Activated CD4-positive, alpha-beta T cell treated with anti-CD3 and anti-CD28 coated beads, Interleukin-2, amount 10 ng/mL, durations not matched to agents 7 days and 5 days (primary cell): ENCODE measurements at regions of chr4 and their contacts with region 1.

Region 1: GRCh38 chr4:153486281-153487151 is 20.4 kb downstream of the TMEM131L start:
- DNase-seq: no peak
- H3K4me3 Mint-ChIP-seq: peak overlapping the region; percentile 65
- H3K27ac Mint-ChIP-seq: peak overlapping the region; percentile 94
- H3K4me1 Mint-ChIP-seq: peaks cover 83% of the 10 kb centered on the region
- H3K27me3 Mint-ChIP-seq: no peaks in the 10 kb centered on the region

Region 2: GRCh38 chr4:153452658-153453378 is 33.7 kb before region 1 on chr4:
- CTCF ChIA-PET with region 1: no interaction called
- POLR2A ChIA-PET with region 1: no interaction called
- DNase-seq: no peak
- H3K4me3 Mint-ChIP-seq: no peak overlapping the region
- H3K27ac Mint-ChIP-seq: peak overlapping the region; percentile 3
- H3K4me1 Mint-ChIP-seq: peaks cover 36% of the 10 kb centered on the region
- H3K27me3 Mint-ChIP-seq: no peaks in the 10 kb centered on the region

Region 3: GRCh38 chr4:153466081-153466948 is 20.2 kb before region 1 on chr4 and contains the start of gene TMEM131L:
- CTCF ChIA-PET with region 1: interaction called, 12 read pairs
- POLR2A ChIA-PET with region 1: no interaction called
- DNase-seq: peak; percentile 68
- H3K4me3 Mint-ChIP-seq: peak within 1 kb of the TSS; percentile 86
- H3K27ac Mint-ChIP-seq: peak within 1 kb of the TSS; percentile 95
- H3K4me1 Mint-ChIP-seq: peaks cover 43% of the 10 kb centered on the region
- H3K27me3 Mint-ChIP-seq: no peaks in the 10 kb centered on the region
- total RNA-seq, gene TMEM131L: 49.3 to 56.0 TPM

Region 4: GRCh38 chr4:153497988-153498967 is 11.8 kb after region 1 on chr4:
- CTCF ChIA-PET with region 1: interaction called, 11 read pairs
- POLR2A ChIA-PET with region 1: no interaction called
- DNase-seq: no peak
- H3K4me3 Mint-ChIP-seq: peak overlapping the region; percentile 66
- H3K27ac Mint-ChIP-seq: peak overlapping the region; percentile 97
- H3K4me1 Mint-ChIP-seq: peaks cover 90% of the 10 kb centered on the region
- H3K27me3 Mint-ChIP-seq: no peaks in the 10 kb centered on the region